Calu3 (cell line): ENCODE measurements at regions of chr12 and their contacts with region 1.

Region 1: DNA sequence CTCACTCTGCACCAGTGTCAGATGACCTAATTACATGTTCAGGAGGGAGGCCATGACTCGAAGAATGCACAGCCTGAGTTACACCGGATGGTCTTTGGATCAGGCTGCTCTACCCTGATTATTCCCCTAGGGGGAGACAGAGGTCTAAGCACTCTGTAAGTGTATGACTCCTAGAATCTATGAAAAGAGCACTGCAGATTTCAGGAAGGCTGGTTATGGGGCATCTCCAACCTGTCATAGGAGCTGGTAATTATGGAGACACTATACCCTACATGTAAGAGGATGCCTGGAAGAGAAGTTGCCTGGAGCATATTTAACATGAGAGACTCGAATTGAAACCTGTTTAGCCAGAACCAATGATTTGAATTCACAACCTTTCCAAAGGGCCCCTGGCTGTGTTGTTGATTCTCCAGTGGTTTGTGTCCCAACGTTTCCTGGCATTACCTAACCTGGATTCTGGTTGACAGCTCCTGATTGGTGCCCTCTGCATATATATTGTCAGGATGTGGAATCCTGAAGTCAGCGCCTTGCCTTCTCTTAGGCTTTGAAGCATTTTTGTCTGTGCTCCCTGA is at the start of gene MUCL1:
- DNase-seq: peak; percentile 83
- H3K4me3 Mint-ChIP-seq: no peak within 1 kb of the TSS
- H3K27ac Mint-ChIP-seq: no peak within 1 kb of the TSS
- H3K4me1 Mint-ChIP-seq: no peaks in the 10 kb centered on the region
- H3K27me3 Mint-ChIP-seq: peaks cover 72% of the 10 kb centered on the region
- CTCF ChIP-seq: peak; percentile 82
- total RNA-seq, gene MUCL1: not detected in 2 replicates

Region 2: DNA sequence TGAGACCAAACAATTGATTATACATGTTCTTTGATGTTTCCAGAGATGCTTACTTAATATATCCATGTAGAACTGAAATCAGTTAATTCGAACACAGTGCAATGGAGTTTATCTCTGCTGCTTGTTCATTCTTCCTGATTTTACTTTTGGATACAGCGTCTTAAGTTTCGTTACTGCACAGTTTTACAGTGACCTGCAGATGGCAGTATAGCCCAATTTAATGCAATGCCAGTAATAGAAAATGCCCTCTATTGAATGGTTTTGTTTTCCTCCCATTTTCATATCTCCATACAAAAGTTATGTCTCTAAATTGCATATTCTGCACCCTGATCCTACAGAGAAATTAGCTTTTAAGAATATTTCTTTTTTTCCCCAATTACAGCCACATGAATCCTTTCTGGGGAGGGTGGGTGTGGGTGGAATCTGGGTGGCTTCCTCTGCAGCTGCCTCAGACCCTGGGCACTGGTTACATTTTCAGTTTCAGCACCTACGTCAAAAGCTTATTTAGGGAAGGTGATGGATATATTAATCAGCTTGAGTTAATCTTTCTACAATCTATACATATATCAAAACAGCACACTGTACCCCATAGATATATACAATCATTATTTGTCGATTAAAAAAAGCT is 104.8 kb before region 1 on chr12:
- CTCF ChIA-PET with region 1: no interaction called
- intact Hi-C with region 1: loop called (anchors 1 kb)
- DNase-seq: peak; percentile 59
- H3K4me3 Mint-ChIP-seq: no peak overlapping the region
- H3K27ac Mint-ChIP-seq: no peak overlapping the region
- H3K4me1 Mint-ChIP-seq: no peaks in the 10 kb centered on the region
- H3K27me3 Mint-ChIP-seq: peaks cover 42% of the 10 kb centered on the region
- CTCF ChIP-seq: peak; percentile 78

Region 3: GRCh38 chr12:54935235-54935951 is 81.3 kb after region 1 on chr12:
- CTCF ChIA-PET with region 1: interaction called, 3 read pairs
- intact Hi-C with region 1: loop called (anchors 1 kb)
- DNase-seq: peak; percentile 42
- H3K4me3 Mint-ChIP-seq: peak overlapping the region; percentile 3
- H3K27ac Mint-ChIP-seq: peak overlapping the region; percentile 87
- H3K4me1 Mint-ChIP-seq: peaks cover 38% of the 10 kb centered on the region
- H3K27me3 Mint-ChIP-seq: no peaks in the 10 kb centered on the region
- CTCF ChIP-seq: no peak